ENCODE measurements at regions of chrX and their contacts with region 1.

Region 1: GRCh38 chrX:103845165-103845653 is 13.2 kb upstream of the RAB9B start:
- DNase-seq: peak; percentile 66
- H3K4me3 Mint-ChIP-seq: no peak overlapping the region
- H3K27ac Mint-ChIP-seq: no peak overlapping the region
- H3K4me1 Mint-ChIP-seq: peaks cover 4% of the 10 kb centered on the region
- H3K27me3 Mint-ChIP-seq: no peaks in the 10 kb centered on the region

Region 2: DNA sequence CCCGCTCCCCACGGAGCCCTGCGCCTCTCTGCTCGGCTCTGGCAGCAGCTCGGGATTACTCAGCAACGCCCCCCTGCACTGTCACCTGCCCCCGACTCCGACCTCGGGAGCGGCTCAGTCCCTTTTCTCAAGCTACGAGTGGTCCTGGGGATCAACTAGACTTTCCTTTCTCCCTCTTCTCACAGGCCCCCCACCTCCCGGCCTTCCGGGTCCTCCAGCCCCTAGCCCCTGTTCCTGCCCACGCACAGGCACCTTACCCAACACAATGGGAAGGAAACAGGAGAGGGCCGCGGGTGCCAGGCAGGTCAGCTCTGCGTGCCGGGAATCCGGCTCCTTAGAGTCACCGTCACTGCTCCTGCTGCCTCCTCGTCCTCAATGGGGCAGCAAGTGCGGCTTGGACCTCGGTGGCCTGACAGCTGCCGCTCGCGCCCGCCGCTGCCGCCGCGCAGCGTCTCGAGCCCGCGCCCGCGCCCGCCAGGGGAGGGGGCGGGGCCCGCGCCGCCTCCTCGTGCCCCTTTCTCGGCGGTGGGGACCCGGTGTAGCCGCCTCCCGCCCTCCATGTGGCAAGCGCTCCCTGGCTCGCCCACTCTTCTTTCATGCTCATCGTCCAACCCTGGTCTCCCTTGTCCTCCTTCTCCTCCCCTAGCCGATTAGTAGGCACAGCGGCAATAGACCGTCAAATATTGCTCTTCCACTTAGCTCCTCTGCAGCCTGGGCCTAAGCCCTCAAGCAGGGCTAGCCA is 13.2 kb before region 1 on chrX and contains the start of gene RAB9B:
- CTCF ChIA-PET with region 1: interaction called, 12 read pairs
- intact Hi-C with region 1: no loop called
- DNase-seq: peak; percentile 66
- H3K4me3 Mint-ChIP-seq: peak within 1 kb of the TSS; percentile 78
- H3K27ac Mint-ChIP-seq: no peak within 1 kb of the TSS
- H3K4me1 Mint-ChIP-seq: peaks cover 2% of the 10 kb centered on the region
- H3K27me3 Mint-ChIP-seq: peaks cover 2% of the 10 kb centered on the region
- total RNA-seq, gene RAB9B: 0.17 to 0.22 TPM

Region 3: GRCh38 chrX:103941201-103941975 is 96.2 kb after region 1 on chrX:
- CTCF ChIA-PET with region 1: interaction called, 4 read pairs
- intact Hi-C with region 1: loop called (anchors 1 kb)
- DNase-seq: peak; percentile 5
- H3K4me3 Mint-ChIP-seq: no peak overlapping the region
- H3K27ac Mint-ChIP-seq: no peak overlapping the region
- H3K4me1 Mint-ChIP-seq: peaks cover 34% of the 10 kb centered on the region
- H3K27me3 Mint-ChIP-seq: no peaks in the 10 kb centered on the region

Region 4: GRCh38 chrX:104098151-104098808 is 253.1 kb after region 1 on chrX:
- CTCF ChIA-PET with region 1: interaction called, 4 read pairs
- intact Hi-C with region 1: loop called (anchors 1 kb)
- DNase-seq: peak; percentile 67
- H3K4me3 Mint-ChIP-seq: no peak overlapping the region
- H3K27ac Mint-ChIP-seq: no peak overlapping the region
- H3K4me1 Mint-ChIP-seq: peaks cover 2% of the 10 kb centered on the region
- H3K27me3 Mint-ChIP-seq: peaks cover 3% of the 10 kb centered on the region

Region 5: GRCh38 chrX:104113222-104113965 is 268.2 kb after region 1 on chrX:
- CTCF ChIA-PET with region 1: interaction called, 3 read pairs
- intact Hi-C with region 1: loop called (anchors 5 kb)
- DNase-seq: peak; percentile 62
- H3K4me3 Mint-ChIP-seq: peak overlapping the region; percentile 74
- H3K27ac Mint-ChIP-seq: no peak overlapping the region
- H3K4me1 Mint-ChIP-seq: peaks cover 33% of the 10 kb centered on the region
- H3K27me3 Mint-ChIP-seq: no peaks in the 10 kb centered on the region

Region 6: DNA sequence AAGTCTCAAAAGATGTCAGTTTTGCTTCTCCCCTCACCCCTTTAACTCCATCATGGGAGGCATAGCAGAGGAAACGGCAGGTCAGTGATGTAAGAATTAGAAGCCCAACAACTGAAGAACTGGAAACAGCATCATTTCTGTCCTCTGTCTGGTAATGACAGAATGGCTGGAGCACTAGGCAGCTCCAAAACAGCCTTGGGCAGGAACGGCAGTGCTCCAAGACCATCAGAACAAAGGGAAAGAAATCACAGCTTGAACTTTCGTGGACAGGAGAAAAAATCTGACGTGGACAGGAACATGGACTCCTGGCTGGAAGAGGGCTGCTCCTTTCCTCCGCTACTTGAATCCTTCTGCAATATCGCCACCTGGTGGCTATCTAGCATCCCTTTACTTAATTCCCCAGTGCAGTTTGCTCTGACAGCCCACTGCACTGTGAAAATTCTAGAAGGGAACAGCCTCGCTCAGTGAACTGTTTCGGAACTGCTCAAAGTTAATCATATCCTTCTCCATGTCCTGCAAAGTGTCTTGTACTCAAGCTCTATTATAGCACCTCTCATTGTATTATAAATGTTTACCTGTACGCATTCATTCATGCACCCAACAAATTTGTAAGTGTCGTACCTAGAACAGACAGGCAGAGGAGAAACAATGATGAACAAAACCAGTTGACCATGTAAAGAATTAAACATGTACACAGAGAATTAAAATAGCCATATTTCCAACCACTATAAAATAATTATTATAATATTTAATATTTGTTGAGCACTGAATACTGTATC is 291.2 kb after region 1 on chrX:
- CTCF ChIA-PET with region 1: interaction called, 14 read pairs
- intact Hi-C with region 1: loop called (anchors 1 kb)
- DNase-seq: peak; percentile 63
- H3K4me3 Mint-ChIP-seq: no peak overlapping the region
- H3K27ac Mint-ChIP-seq: no peak overlapping the region
- H3K4me1 Mint-ChIP-seq: peaks cover 15% of the 10 kb centered on the region
- H3K27me3 Mint-ChIP-seq: no peaks in the 10 kb centered on the region

Region 7: GRCh38 chrX:104270920-104271512 is 425.8 kb after region 1 on chrX:
- CTCF ChIA-PET with region 1: no interaction called
- intact Hi-C with region 1: loop called (anchors 2 kb)
- DNase-seq: peak; percentile 64
- H3K4me3 Mint-ChIP-seq: peak overlapping the region; percentile 25
- H3K27ac Mint-ChIP-seq: no peak overlapping the region
- H3K4me1 Mint-ChIP-seq: peaks cover 4% of the 10 kb centered on the region
- H3K27me3 Mint-ChIP-seq: peaks cover 8% of the 10 kb centered on the region

Measured in activated naive CD4-positive, alpha-beta T cell treated with anti-CD3 and anti-CD28 coated beads for 36 hours (primary cell).